Activated T-helper 1 cell treated with anti-CD3 and anti-CD28 coated beads, Interleukin-12 subunit alpha, Interleukin-12 subunit beta, Interleukin-2, Interleukin-4 antibody, amounts not matched to agents 30 ng/mL and 10 ng/mL and 1 ng/mL, durations not matched to agents 14 hours and 24 hours and 36 hours (primary cell): ENCODE measurements at regions of chr5 and their contacts with region 1.

Region 1: GRCh38 chr5:95822542-95823181 is at the start of gene GLRX:
- DNase-seq: peak; percentile 55
- H3K4me3 Mint-ChIP-seq: peak within 1 kb of the TSS; percentile 91
- H3K27ac Mint-ChIP-seq: peak within 1 kb of the TSS; percentile 91
- H3K4me1 Mint-ChIP-seq: peaks cover 68% of the 10 kb centered on the region
- H3K27me3 Mint-ChIP-seq: no peaks in the 10 kb centered on the region
- total RNA-seq, gene GLRX: 17.2 and 18.3 TPM in 2 replicates

Region 2: DNA sequence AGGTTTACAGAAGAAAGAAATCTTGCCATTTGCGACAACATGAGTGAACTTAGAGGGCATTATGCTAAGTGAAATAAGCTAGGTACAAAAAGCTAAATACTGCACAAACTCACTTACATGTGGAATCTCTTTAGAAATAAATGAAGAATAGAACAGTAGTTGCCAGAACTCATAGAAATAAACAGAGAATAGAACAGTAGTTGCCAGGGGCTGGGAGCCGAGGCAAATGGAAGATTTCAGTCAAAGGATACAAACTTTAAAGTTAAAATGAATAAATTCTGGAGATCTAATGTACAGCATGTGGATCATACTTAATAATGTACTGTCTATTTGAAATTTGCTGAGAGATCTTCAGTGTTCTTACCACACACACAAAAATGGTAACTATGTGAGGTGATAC is 368.1 kb before region 1 on chr5:
- intact Hi-C with region 1: no loop called
- DNase-seq: no peak
- H3K4me3 Mint-ChIP-seq: no peak overlapping the region
- H3K27ac Mint-ChIP-seq: no peak overlapping the region
- H3K4me1 Mint-ChIP-seq: no peaks in the 10 kb centered on the region
- H3K27me3 Mint-ChIP-seq: peaks cover 3% of the 10 kb centered on the region

Region 3: DNA sequence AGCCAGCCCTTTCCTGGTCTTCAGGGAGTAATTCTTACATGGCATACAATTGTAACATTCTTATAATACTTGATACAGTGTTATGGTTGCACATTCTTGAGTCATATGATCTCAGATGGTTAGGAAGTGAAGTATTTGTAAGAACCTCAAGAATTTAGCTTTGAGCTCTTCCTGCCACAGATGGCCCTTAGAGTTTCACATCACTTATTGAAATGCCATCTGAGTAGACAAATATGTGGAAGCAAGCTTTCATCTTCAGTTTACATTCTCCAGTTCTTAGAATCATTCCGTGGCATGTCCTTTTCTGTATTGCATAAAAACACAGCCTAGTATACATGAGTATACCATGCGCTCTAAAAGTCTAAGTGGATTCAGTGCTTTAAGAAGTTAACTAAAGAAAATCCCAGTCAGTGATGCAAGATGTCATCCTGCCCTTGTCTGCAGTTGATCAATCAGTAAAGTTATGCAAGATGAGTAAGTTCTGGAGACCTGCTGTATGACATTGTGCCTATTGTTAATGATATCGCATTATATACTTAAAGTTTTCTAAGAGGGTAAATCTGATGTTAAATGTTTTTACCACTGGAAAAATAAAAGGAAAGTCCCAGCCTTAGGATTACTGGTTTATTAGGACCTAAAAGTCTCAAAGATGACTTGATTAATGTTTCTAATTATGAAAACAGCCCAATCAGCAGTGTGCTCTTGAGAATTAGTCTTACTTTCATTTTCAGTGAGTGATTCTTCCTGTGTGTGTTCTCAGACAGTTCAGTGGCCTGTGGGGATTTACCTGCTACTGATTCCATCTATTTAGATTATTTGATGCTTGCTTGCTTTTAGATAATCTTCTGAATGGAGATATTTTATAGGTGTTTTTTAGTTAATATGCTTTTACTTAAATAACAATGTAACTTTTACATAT is 62.1 kb before region 1 on chr5:
- intact Hi-C with region 1: loop called (anchors 2 kb)
- DNase-seq: no peak
- H3K4me3 Mint-ChIP-seq: peak overlapping the region; percentile 52
- H3K27ac Mint-ChIP-seq: peak overlapping the region; percentile 45
- H3K4me1 Mint-ChIP-seq: peaks cover 30% of the 10 kb centered on the region
- H3K27me3 Mint-ChIP-seq: peaks cover 22% of the 10 kb centered on the region

Region 4: GRCh38 chr5:95781101-95781583 is 41.5 kb before region 1 on chr5:
- intact Hi-C with region 1: loop called (anchors 1 kb)
- DNase-seq: peak; percentile 47
- H3K4me3 Mint-ChIP-seq: peak overlapping the region; percentile 56
- H3K27ac Mint-ChIP-seq: peak overlapping the region; percentile 29
- H3K4me1 Mint-ChIP-seq: peaks cover 22% of the 10 kb centered on the region
- H3K27me3 Mint-ChIP-seq: peaks cover 2% of the 10 kb centered on the region

Region 5: GRCh38 chr5:95808686-95809413 is 13.8 kb before region 1 on chr5:
- intact Hi-C with region 1: loop called (anchors 1 kb)
- DNase-seq: peak; percentile 81
- H3K4me3 Mint-ChIP-seq: peak overlapping the region; percentile 72
- H3K27ac Mint-ChIP-seq: peak overlapping the region; percentile 77
- H3K4me1 Mint-ChIP-seq: peaks cover 58% of the 10 kb centered on the region
- H3K27me3 Mint-ChIP-seq: no peaks in the 10 kb centered on the region

Region 6: GRCh38 chr5:95835682-95836385 is 13.2 kb after region 1 on chr5:
- intact Hi-C with region 1: loop called (anchors 1 kb)
- DNase-seq: no peak
- H3K4me3 Mint-ChIP-seq: peak overlapping the region; percentile 76
- H3K27ac Mint-ChIP-seq: peak overlapping the region; percentile 54
- H3K4me1 Mint-ChIP-seq: peaks cover 37% of the 10 kb centered on the region
- H3K27me3 Mint-ChIP-seq: peaks cover 2% of the 10 kb centered on the region

Region 7: DNA sequence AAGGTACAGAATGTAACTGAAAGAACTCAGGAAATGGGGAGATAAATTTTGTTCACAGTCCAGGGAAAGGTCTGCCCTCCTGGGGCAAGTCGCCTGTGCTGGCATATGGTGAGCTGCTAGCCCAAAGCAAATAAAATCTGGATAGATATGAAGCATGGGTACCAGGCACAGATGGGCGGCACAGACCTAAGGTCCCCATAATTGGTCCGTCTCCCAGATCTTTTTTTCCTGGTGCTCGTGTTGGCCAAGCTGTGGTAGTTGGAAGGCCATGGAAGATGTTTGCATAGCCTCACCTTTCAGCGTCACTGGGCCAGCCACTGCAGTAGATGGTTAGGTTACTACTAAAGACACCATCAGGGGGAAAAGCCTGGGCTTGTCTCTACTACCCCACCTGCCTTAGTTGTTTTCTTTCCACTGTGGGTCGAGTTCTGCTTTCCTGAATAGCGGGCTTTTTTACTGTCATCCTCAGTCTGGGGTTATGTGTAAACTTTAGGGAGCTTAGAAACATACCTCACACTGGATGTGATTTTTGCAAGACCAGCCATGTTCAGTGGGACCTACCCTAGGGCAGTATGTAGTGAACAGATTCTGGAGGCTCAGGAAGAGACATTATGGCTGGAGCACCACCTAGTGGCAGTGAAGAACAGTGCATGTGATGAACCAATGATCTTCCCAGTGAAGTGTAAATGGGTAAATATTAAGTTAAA is 24.0 kb after region 1 on chr5:
- intact Hi-C with region 1: loop called (anchors 1 kb)
- DNase-seq: peak; percentile 44
- H3K4me3 Mint-ChIP-seq: no peak overlapping the region
- H3K27ac Mint-ChIP-seq: no peak overlapping the region
- H3K4me1 Mint-ChIP-seq: peaks cover 37% of the 10 kb centered on the region
- H3K27me3 Mint-ChIP-seq: peaks cover 12% of the 10 kb centered on the region

Region 8: DNA sequence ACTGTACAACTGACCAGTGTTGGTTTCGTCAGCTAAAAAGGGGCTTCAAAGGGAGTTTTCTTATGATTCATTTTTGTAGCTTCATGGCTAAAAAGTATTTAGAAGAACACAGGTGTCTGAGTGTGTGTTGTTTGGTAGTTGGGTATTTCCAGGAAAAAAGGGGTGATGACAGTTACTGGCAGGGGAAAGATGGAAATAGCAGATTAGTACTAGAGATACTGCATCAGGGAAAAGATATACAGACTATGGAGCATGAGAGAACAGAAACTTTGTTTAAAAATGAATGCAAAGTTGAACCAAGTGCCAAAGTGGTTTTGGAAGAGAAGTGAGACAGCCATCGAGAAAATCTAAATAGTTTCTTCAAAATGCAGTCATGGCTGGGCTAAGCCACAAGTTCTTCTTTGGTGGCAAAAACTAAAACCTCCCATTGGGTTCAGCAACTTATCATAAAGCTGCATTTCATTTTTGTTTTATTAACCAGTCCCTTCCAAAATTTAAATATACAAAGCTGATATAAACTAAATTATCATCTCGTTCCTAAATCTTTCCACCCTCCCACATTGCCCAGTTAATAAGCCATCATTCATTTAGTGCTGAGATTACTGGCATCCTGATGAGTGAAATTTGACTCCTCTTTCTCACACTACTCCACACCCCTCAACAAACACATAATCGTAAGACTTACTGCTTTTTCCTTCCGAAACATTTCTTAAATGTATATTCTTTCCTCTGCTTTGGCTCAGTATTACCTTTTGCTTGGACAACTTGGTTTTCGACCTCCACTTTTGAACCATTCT is 105.5 kb after region 1 on chr5:
- intact Hi-C with region 1: loop called (anchors 1 kb)
- DNase-seq: no peak
- H3K4me3 Mint-ChIP-seq: peak overlapping the region; percentile 67
- H3K27ac Mint-ChIP-seq: peak overlapping the region; percentile 89
- H3K4me1 Mint-ChIP-seq: peaks cover 79% of the 10 kb centered on the region
- H3K27me3 Mint-ChIP-seq: no peaks in the 10 kb centered on the region

Region 9: GRCh38 chr5:96008987-96009647 is 186.5 kb after region 1 on chr5:
- intact Hi-C with region 1: no loop called
- DNase-seq: no peak
- H3K4me3 Mint-ChIP-seq: no peak overlapping the region
- H3K27ac Mint-ChIP-seq: no peak overlapping the region
- H3K4me1 Mint-ChIP-seq: no peaks in the 10 kb centered on the region
- H3K27me3 Mint-ChIP-seq: no peaks in the 10 kb centered on the region